ENCODE measurements at regions of chr15 and their contacts with region 1.

Region 1: GRCh38 chr15:75578948-75579920 is at the start of gene PTPN9:
- DNase-seq: peak; percentile 71
- H3K4me3 ChIP-seq: peak within 1 kb of the TSS; percentile 91 to 94
- H3K27ac ChIP-seq: peak within 1 kb of the TSS; percentile 84 to 92
- H3K4me1 ChIP-seq: no peaks in the 10 kb centered on the region
- H3K27me3 ChIP-seq: no peaks in the 10 kb centered on the region
- CTCF ChIP-seq: peak; percentile 22 to 46 (median 32)
- POLR2A ChIP-seq: peak; percentile 64
- total RNA-seq, gene PTPN9: 19.3 to 22.3 TPM

Region 2: GRCh38 chr15:75367913-75368688 is 211.1 kb before region 1 on chr15 and contains the start of gene MAN2C1:
- intact Hi-C with region 1: loop called (anchors 1 kb)
- DNase-seq: peak; percentile 97
- H3K4me3 ChIP-seq: peak within 1 kb of the TSS; percentile 74 to 83
- H3K27ac ChIP-seq: peak within 1 kb of the TSS; percentile 94 to 95
- H3K4me1 ChIP-seq: peaks cover 4% of the 10 kb centered on the region
- H3K27me3 ChIP-seq: no peaks in the 10 kb centered on the region
- CTCF ChIP-seq: peak; percentile 74 to 93 (median 91)
- POLR2A ChIP-seq: peak; percentile 87
- total RNA-seq, gene MAN2C1: 184 to 238 TPM

Region 3: DNA sequence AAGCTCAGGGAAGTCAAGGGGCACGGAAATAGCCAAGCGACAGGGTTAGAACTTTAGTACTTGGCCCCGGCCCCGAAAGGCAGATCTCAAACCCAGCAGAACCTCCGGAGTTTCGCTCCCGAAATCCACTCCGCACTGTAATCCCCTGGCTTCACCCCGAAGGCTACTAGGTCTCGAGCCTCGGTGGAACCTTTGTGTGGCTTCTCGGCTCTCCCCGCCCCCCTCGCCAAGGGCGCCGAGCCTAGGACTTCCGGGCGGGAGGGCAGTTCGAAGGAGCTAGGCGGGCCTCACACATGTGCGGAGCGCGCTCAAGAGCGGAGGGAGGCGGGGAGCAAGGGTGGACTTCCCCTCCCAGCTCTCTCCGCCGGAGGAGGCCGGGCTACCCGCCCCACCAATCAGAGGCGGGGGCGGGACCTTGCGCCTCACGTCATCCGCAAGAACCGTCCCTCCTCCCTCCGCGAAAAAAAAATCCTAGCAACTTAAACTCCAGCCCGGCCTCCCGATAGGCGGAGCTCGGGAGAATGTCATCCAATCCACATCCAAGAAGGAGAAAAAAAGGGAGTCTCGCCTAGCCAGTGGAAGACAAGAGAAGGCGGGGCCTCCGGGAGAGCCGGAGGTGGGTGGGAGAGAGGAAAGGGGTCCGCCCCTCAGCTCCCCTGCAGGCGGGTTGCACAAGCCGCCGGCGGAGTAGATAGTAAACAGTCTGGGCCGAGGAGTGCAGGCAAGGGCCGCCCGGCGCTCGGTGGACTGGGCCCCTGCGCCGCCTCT is 125.3 kb before region 1 on chr15:
- intact Hi-C with region 1: loop called (anchors 5 kb)
- DNase-seq: peak; percentile 99
- H3K4me3 ChIP-seq: peak overlapping the region; percentile 72 to 96
- H3K27ac ChIP-seq: peak overlapping the region; percentile 98 to 100
- H3K4me1 ChIP-seq: peaks cover 16% of the 10 kb centered on the region
- H3K27me3 ChIP-seq: no peaks in the 10 kb centered on the region
- CTCF ChIP-seq: peak in 1 of 4 experiments; percentile 50
- POLR2A ChIP-seq: peak; percentile 87

Region 4: GRCh38 chr15:75532413-75533147 is 46.7 kb before region 1 on chr15:
- intact Hi-C with region 1: loop called (anchors 5 kb)
- DNase-seq: peak; percentile 21
- H3K4me3 ChIP-seq: no peak overlapping the region
- H3K27ac ChIP-seq: peak overlapping the region; percentile 69 to 79
- H3K4me1 ChIP-seq: peaks cover 20% of the 10 kb centered on the region
- H3K27me3 ChIP-seq: no peaks in the 10 kb centered on the region
- CTCF ChIP-seq: peak in 3 of 4 experiments; percentile 19 to 36 (median 22)
- POLR2A ChIP-seq: no peak

Region 5: DNA sequence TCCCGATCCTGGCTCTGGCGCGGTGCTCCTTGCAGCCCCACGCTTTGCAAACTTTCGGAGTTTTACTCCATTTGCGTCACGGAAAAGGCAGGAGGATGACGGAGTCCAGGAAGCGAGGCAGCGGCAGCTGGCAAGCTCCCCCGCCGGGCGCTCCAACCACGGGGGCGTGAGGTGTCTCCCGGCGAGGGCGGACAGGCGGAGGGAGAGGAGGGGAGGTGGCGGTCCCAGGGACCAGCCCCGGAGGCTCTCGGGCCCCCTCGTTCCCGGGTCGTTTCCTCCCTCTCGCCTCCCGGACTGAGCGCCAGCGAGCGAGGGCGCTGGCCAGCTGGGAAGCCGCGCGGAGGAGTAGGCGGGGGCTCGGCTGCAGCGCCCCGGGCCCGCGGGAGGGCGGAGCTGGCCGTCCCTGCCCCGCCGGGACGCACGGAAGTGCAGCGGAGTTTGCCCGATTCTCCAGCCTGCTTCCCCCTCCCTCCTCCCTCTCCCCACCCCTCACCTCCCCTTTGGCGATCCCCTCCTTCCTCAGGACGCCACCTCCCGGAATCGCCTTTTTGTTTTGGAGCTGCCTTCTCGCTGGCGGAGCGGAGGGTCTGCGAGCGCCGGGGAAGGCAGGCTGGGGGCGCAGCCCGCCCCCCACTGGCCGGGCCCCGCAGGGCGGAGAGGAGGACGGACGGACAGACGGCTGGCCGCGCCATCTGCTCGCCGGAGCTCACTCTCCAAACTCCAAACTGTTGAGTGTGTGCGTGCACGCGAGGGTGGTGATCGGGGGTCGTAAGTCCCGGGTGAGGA is 68.3 kb after region 1 on chr15 and contains the start of gene SNX33:
- intact Hi-C with region 1: loop called (anchors 5 kb)
- DNase-seq: peak; percentile 76
- H3K4me3 ChIP-seq: peak within 1 kb of the TSS; percentile 70 to 77
- H3K27ac ChIP-seq: peak within 1 kb of the TSS; percentile 92 to 93
- H3K4me1 ChIP-seq: peaks cover 37% of the 10 kb centered on the region
- H3K27me3 ChIP-seq: no peaks in the 10 kb centered on the region
- CTCF ChIP-seq: peak; percentile 40 to 54 (median 42)
- POLR2A ChIP-seq: peak; percentile 85
- total RNA-seq, gene SNX33: 23.6 to 25.6 TPM